ENCODE measurements at regions of chr10 and their contacts with region 1.

Region 1: GRCh38 chr10:100518761-100519241 is 860 bp downstream of the SEC31B start:
- DNase-seq: peak; percentile 81
- H3K4me3 Mint-ChIP-seq: no peak overlapping the region
- H3K27ac Mint-ChIP-seq: no peak overlapping the region
- H3K4me1 Mint-ChIP-seq: peaks cover 41% of the 10 kb centered on the region
- H3K27me3 Mint-ChIP-seq: no peaks in the 10 kb centered on the region

Region 2: GRCh38 chr10:100338434-100339036 is 180.3 kb before region 1 on chr10:
- CTCF ChIA-PET with region 1: interaction called, 41 read pairs
- DNase-seq: peak; percentile 89
- H3K4me3 Mint-ChIP-seq: no peak overlapping the region
- H3K27ac Mint-ChIP-seq: peak overlapping the region; percentile 71
- H3K4me1 Mint-ChIP-seq: peaks cover 22% of the 10 kb centered on the region
- H3K27me3 Mint-ChIP-seq: peaks cover 38% of the 10 kb centered on the region

Region 3: GRCh38 chr10:100346765-100347567 is 171.8 kb before region 1 on chr10 and contains the start of gene SCD:
- CTCF ChIA-PET with region 1: interaction called, 41 read pairs
- DNase-seq: peak; percentile 95
- H3K4me3 Mint-ChIP-seq: peak within 1 kb of the TSS; percentile 99
- H3K27ac Mint-ChIP-seq: peak within 1 kb of the TSS; percentile 80
- H3K4me1 Mint-ChIP-seq: peaks cover 68% of the 10 kb centered on the region
- H3K27me3 Mint-ChIP-seq: no peaks in the 10 kb centered on the region

Region 4: DNA sequence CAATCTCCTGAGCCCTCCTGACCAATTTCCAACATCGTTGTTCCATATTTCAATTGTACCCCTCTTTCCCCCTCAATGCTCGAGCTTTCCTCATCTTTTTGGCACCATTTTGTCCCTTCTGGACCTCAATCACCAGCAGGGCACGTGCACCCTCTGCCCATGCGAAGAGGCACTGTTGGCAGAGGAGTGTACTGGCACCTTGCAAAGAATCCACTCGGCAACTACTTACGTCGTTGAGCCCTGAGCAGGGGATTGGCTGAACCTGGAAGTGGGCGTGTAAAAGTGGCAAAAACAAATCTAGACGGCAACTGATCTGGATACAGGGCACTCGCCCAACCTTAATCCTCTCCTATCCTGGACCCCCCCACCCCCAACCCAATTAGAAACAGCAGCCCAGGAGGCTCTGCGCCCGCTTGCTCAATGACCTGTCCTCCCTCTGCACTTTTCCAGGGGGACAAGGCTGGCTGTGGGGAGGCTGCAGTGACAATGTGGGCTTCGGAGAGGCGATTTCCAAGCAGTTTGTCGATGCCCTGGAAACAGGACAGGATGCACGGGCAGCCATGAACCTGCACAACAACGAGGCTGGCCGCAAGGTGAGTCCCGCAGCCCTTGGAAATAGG is 37.2 kb before region 1 on chr10:
- CTCF ChIA-PET with region 1: interaction called, 206 read pairs
- DNase-seq: peak; percentile 93
- H3K4me3 Mint-ChIP-seq: peak overlapping the region; percentile 72
- H3K27ac Mint-ChIP-seq: peak overlapping the region; percentile 67
- H3K4me1 Mint-ChIP-seq: peaks cover 31% of the 10 kb centered on the region
- H3K27me3 Mint-ChIP-seq: peaks cover 18% of the 10 kb centered on the region

Region 5: GRCh38 chr10:100529475-100530298 is 10.9 kb after region 1 on chr10 and contains the start of gene NDUFB8:
- CTCF ChIA-PET with region 1: interaction called, 32 read pairs
- DNase-seq: peak; percentile 90
- H3K4me3 Mint-ChIP-seq: peak within 1 kb of the TSS; percentile 82
- H3K27ac Mint-ChIP-seq: peak within 1 kb of the TSS; percentile 93
- H3K4me1 Mint-ChIP-seq: peaks cover 48% of the 10 kb centered on the region
- H3K27me3 Mint-ChIP-seq: no peaks in the 10 kb centered on the region

Region 6: DNA sequence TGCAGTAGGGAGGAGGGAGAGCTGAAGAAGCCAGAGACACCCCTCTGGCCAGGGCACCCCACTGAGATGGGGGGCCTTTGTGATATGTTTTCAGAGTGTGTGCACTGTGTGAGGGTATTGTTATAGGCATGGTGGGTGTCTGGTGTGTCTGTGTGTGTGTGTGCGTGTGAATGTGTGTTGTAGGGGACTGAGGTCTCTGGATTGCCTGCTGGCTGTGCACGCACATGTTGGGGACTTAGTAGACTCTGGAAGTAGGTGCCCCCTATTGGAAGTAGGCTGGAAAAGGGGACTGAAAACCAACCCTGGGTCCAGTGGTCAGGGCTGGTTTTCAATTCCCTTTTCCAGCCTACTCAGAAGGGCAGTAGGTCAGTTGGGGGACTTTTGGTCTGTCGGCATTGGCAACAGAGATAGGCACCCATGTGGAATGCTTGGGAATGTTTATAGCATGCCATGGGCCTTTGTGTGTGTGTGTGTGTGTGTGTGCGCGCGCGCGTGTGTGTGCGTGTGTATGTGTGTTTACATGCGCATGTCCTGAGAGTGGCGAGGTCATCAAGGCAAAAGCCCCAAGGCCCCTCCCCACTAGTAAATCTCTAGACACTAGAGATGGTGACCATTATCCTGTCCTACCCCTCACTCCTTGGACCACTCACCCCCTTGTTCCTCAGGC is 95.8 kb after region 1 on chr10:
- CTCF ChIA-PET with region 1: no interaction called
- DNase-seq: no peak
- H3K4me3 Mint-ChIP-seq: no peak overlapping the region
- H3K27ac Mint-ChIP-seq: no peak overlapping the region
- H3K4me1 Mint-ChIP-seq: no peaks in the 10 kb centered on the region
- H3K27me3 Mint-ChIP-seq: peaks cover 62% of the 10 kb centered on the region

Region 7: DNA sequence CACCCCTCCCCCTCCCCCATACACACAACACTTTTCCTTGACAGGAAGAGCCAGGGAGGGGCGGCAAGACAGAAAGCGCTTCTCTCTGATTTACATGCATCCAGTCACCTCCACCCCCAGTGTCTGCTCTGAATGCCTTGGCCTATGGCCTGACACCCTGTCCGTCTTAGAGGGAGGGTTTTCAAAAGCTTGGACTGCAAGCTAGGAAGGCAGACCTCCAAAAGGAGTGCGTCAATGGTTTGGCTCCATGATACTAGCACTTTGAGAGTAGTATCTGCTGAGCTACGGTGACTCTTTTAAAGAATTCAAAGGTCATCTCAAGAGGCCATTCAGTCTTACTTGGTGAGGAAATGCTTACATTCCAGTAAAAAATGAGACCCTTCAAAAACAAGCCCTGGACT is 206.3 kb after region 1 on chr10:
- CTCF ChIA-PET with region 1: no interaction called
- DNase-seq: no peak
- H3K4me3 Mint-ChIP-seq: no peak overlapping the region
- H3K27ac Mint-ChIP-seq: no peak overlapping the region
- H3K4me1 Mint-ChIP-seq: peaks cover 14% of the 10 kb centered on the region
- H3K27me3 Mint-ChIP-seq: peaks cover 89% of the 10 kb centered on the region